ENCODE measurements at regions of chr1 and their contacts with region 1.

Region 1: DNA sequence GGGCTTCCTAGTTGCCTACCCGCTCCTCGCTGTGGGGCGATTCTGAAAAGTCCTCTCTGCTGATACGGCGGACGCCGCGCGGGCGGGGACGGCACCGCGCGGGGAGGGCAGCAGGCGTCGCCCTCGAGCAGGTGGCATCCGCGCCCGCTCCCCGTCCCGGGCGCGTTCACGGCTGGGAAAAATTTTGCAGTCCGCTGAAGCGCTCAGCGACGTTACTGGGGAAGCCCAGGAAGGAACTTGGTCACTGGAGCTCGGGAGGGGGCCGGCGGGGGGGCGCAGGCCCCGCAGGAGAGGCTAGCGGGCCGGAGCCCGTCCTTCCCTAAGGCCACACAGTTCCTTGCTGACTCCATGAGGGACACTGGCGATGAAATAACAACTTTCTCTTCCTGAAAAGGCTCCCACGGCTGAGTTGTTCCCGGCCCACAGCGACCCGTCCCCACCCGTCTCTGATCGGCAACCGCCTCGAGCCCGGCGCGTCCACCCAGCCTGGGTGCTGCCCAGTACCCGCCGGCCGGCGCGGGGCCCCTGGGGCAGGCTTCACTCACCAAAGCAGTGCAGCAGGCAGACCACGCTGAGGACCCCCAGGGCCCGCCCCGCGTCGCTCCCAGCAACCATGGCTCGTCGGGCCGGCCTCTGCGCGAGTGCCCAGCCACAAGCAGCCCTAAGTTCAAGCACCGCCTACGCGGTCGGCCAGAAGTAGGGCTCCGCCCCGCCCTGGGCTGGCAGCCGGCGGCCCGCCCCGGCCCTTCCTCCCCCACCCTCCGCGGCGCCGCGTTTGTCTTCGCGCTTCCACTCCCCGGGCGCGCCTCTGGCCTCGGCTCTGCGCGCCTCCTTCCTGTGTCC is at the start of gene CD58:
- DNase-seq: peak in 9 of 10 donors; percentile 37 to 83 (median 67)
- H3K4me3 ChIP-seq: peak within 1 kb of the TSS; percentile 62 to 89 (median 80)
- H3K27ac ChIP-seq: peak within 1 kb of the TSS in 57 of 59 donors; percentile 18 to 96 (median 85)
- H3K27me3 ChIP-seq: no peaks in the 10 kb centered on the region
- CTCF ChIP-seq: peak in 53 of 56 donors; percentile 25 to 80 (median 57)
- total RNA-seq, gene CD58: 1.2 to 9.8 (median 5.0) TPM

Region 2: GRCh38 chr1:116133696-116134650 is 436.6 kb before region 1 on chr1:
- intact Hi-C with region 1: loop called in 1 of 2 experiments (anchors 10 kb)
- DNase-seq: no peak
- H3K4me3 ChIP-seq: no peak overlapping the region
- H3K27ac ChIP-seq: no peak overlapping the region
- H3K27me3 ChIP-seq: no peaks in the 10 kb centered on the region
- CTCF ChIP-seq: peak in 25 of 56 donors; percentile 3 to 40 (median 20)

Region 3: DNA sequence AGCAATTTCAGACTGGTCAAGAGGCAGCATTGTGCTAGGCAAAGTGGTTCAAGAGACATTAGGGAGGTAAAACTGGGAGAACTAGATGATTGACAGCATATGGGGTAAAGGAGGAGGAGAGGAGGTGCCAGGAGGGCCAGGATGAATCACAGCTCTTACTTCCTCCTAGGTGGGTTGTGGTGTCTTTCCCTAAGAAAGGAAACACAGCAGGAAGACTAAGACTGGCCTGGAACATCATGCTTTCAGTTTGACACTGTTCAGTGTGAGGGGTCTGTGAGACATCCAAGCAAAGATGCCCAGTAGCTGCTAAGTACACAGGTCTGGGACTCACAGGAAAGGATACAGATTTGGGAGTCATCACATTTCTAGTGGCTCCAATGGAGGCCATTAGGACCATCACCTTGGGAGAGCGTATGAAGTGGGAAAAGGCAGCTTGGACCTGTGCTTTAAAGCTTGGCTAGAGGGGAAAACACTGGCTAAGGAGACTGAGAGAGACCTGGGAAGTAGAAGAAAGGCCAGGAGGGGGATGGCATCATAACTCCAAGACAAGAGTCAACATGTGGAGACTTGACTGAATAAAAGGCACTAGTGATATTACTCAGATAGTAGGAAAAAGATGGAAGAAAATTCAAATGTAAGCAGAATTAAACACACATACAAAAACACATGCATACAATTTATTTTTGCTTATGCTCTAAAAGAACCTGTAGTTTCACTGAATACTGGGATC is 17.0 kb before region 1 on chr1:
- intact Hi-C with region 1: no loop called
- DNase-seq: no peak
- H3K4me3 ChIP-seq: no peak overlapping the region
- H3K27ac ChIP-seq: no peak overlapping the region
- H3K27me3 ChIP-seq: no peaks in the 10 kb centered on the region
- CTCF ChIP-seq: no peak

Region 4: DNA sequence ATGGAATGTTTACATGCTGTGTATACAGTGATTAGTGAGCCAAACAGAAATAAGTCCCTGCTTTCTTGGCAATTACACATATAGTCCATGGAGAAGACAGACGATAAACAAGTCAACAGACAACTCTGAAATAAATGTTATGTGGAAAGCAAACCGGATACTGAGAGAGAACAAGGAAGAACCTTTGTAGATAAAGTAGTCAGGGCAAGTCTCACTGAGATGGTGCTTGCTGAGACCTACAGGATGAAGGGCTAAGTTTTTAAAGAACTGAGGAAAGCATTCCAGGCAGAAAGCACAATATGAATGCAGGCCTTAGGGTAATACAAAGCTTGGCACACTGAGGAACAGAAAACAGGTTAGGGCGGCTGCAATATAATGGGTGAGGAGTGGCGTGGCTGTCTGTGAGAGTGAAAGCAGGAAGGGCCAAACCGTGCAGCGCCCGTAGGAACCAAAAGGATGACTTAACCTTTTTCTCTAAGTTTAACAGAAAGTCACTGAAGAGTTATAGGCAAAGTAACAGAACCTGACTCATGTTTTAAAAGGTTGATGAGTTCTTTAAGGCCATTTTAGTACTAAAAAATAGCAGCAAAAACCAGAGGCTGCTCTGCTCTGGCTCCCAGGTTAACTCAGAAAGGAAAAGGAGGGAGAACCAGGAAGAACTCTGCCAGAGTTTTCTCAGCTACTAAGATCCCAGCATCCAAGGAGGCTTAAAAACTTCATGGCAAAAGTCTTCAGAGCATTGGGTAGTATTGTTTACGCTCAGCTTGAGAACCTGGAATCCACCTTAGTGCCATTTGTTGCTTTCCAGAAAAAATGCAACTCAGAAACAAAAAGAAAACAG is 480.9 kb after region 1 on chr1:
- intact Hi-C with region 1: loop called (anchors 2 to 10 kb)
- DNase-seq: no peak
- H3K4me3 ChIP-seq: peak overlapping the region in 1 of 59 donors; percentile 9
- H3K27ac ChIP-seq: no peak overlapping the region
- H3K27me3 ChIP-seq: no peaks in the 10 kb centered on the region
- CTCF ChIP-seq: no peak

Region 5: DNA sequence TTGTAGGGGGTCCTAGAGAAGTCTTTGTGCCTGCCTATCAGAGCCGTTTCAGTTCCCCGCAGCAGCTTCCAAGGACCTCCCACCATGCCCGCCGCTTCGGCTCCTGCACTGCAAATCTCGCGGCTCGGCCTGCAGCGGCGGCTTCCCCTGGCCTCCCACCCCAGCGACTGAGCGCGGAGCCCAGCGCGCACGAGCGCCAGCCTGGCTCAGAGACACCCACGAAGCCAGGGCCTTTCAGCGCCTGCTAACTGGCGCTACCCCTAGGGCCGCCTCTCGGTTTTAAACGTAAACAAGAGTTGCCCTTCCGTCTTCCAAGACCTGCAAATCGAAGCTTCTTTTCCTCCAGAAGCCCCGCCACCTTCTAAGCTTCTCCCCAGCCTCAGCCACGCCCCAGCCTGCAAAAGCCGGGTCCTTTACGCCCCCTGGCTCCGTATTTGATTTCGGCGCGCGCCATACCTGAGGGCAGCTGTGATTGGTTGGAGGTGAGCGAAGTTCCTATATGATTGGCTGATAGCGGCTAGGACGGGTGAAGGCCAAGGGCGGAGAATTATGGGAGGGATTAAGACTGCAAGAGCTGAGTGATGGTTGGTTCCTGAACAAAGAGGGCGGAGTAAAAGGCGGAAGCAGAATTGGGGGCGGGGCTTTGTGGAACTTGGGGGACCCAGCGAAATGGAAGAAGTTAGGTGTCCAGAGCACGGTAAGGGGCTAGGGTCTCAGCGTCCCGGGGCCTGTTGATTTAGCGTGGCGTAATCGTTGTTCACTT is 489.3 kb after region 1 on chr1 and contains the start of gene TTF2:
- intact Hi-C with region 1: loop called (anchors 2 to 10 kb)
- DNase-seq: peak; percentile 68 to 94 (median 92)
- H3K4me3 ChIP-seq: peak within 1 kb of the TSS; percentile 65 to 97 (median 84)
- H3K27ac ChIP-seq: peak within 1 kb of the TSS in 15 of 59 donors; percentile 3 to 73 (median 48)
- H3K27me3 ChIP-seq: no peaks in the 10 kb centered on the region
- CTCF ChIP-seq: peak in 47 of 56 donors; percentile 4 to 66 (median 44)
- total RNA-seq, gene TTF2: 6.5 to 31.5 (median 14.0) TPM

Measured in dorsolateral prefrontal cortex (tissue), 120 donors.